ENCODE measurements at regions of chr4 and their contacts with region 1.

Region 1: DNA sequence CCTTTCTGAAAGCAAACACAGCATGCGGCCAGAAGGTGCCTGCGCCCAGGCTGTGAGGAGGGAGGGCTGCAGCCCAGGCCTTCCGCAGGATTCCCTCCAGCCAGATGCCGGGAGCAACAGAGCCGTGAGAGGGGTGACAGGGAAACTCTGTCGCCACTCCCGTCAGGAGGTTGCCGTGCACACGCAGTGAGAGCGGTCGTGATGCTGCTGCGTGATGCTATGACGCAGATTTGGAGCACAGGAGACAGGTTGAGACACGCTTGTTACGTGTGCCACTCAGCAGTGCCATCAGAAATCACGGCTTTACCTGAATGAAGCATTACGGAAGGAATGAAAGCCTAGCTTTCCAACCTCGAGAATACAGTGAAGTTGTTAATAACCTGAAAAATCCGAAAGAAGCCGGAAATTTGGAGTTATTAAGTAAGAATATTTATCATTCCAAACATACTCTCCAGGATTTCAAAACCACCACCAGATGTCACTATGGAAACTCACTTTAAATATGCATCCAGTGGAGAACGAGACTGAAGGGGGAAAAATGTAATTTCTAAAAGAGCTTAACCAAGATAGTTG is 54.4 kb downstream of the FAT1 start:
- DNase-seq: no peak
- H3K4me3 ChIP-seq: no peak overlapping the region
- H3K27ac ChIP-seq: no peak overlapping the region
- H3K4me1 ChIP-seq: peaks cover 7% of the 10 kb centered on the region
- H3K27me3 ChIP-seq: no peaks in the 10 kb centered on the region
- CTCF ChIP-seq: no peak

Region 2: DNA sequence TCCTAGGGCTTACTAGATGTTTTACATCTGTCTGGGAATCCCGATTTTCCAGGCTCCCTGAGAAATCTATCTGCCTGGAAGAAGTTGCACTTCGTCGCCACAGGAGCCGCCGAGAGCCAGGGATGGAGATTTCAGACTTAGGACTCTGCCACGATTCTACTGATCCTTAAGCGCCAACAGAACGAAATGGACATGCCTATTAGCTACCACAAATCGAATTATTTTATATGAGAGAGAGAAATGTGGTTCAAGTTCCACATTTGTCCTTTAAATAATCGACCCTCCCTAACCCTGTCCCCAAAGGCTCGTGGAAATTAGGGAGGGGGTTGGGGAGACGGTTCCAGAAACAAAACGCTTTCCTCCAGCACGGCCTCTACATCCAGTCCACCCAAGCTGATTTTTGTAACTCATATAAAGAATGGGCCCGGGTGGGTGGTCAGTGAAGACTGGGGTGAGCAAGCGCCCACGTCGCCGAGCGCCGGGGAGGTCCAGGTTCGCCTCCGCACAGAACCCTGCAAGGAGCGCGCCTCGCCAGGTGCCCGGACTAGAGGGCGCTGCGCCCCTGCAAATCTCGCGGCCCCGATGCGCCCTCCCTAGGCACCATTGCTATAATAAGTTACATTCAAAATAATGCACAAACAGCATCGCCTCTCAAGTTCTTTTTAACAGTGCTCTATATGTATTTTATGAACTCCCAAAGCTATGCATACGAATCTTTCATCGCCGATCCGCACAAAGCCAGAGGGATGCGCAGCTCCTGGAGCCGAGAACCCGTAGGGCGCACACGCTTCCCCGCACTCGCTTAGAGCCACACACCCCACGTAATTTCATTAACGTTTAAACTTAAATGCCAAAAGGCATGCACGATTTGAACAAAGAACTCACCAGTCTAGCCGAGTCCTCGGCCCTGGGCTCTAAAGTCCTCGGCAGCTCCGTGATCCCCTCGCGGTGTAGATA is 56.5 kb after region 1 on chr4:
- intact Hi-C with region 1: loop called (anchors 5 kb)
- DNase-seq: peak; percentile 87
- H3K4me3 ChIP-seq: peak overlapping the region; percentile 76
- H3K27ac ChIP-seq: peak overlapping the region; percentile 92
- H3K4me1 ChIP-seq: no peaks in the 10 kb centered on the region
- H3K27me3 ChIP-seq: no peaks in the 10 kb centered on the region
- CTCF ChIP-seq: peak; percentile 66

Measured in colonic mucosa (tissue), 4 donors.